ENCODE measurements at regions of chr2 and their contacts with region 1.

Region 1: DNA sequence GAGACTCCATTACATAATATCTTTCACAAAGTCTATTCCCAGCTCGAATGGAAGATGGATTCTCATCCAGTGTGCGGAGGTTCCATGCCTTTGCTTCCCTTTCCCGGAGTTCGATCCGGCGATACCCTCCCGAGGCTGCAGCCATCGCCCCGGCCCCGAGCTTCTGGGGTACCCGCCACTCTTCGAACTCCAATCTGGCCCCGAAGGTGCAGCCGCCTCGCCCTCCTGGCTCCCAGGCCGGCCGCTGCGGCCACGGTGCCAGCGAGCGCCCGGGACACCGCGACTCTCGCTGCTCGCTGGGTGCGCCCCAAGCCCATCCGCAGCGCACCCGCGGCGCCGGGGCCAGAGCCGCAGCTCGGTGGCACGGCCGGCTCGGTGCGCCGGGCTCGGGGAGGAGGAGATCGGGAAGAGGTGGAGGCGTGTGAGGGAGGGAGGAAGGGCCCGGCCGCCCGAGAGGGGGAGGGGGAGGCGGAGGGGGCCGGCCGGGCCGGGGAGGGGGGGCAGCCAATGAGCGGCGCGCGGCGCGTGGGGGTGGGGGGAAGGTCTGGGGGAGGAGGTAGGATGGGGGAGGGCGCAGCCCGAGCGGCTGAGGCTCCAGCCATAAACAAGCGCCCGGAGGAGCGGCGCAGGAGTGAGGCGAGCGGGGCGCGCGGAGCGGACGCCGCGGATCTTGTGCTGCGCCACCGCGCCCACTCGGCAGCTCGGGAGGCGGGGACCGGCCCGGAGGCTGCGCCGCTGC is at the start of gene CRIM1:
- DNase-seq: peak; percentile 79
- ATAC-seq: peak; percentile 63
- H3K4me3 ChIP-seq: peak within 1 kb of the TSS; percentile 81 to 98 (median 89)
- H3K27ac ChIP-seq: peak within 1 kb of the TSS; percentile 76
- H3K4me1 ChIP-seq: peaks cover 59% of the 10 kb centered on the region
- H3K27me3 ChIP-seq: no peaks in the 10 kb centered on the region; a peak in 1 of 5 replicates
- CTCF ChIP-seq: no peak
- EP300 ChIP-seq: no peak; a peak in 1 of 4 replicates
- POLR2A ChIP-seq: peak; percentile 91 to 95
- RAD21 ChIP-seq: peak; percentile 53
- total RNA-seq, gene CRIM1: 21.5 and 39.1 TPM in 2 replicates

Region 2: DNA sequence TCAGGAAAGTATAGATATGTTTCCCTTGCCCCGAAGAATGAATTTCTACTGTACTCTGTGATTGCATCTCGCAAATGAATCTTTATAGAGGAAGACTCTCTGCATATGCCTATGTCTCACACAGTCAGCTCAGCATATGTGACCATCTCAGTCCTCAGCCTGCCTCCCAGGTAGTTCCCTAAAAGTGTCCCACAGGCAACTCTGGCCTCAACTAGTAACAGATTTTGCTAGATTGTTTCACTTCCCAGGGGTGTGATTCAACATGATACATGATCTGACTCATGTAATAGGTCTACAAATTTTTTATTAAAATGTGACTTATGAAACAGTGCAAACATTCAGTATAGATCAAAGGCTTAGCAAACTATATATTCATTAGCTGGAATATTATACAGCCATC is 296.4 kb before region 1 on chr2:
- CTCF ChIA-PET with region 1: no interaction called
- POLR2A ChIA-PET with region 1: no interaction called
- in situ Hi-C with region 1: no loop called
- intact Hi-C with region 1: no loop called
- DNase-seq: no peak
- ATAC-seq: no peak
- H3K4me3 ChIP-seq: no peak overlapping the region
- H3K27ac ChIP-seq: no peak overlapping the region
- H3K4me1 ChIP-seq: no peaks in the 10 kb centered on the region
- H3K27me3 ChIP-seq: no peaks in the 10 kb centered on the region; a peak in 1 of 5 replicates
- CTCF ChIP-seq: no peak
- EP300 ChIP-seq: no peak
- POLR2A ChIP-seq: no peak
- RAD21 ChIP-seq: no peak

Region 3: DNA sequence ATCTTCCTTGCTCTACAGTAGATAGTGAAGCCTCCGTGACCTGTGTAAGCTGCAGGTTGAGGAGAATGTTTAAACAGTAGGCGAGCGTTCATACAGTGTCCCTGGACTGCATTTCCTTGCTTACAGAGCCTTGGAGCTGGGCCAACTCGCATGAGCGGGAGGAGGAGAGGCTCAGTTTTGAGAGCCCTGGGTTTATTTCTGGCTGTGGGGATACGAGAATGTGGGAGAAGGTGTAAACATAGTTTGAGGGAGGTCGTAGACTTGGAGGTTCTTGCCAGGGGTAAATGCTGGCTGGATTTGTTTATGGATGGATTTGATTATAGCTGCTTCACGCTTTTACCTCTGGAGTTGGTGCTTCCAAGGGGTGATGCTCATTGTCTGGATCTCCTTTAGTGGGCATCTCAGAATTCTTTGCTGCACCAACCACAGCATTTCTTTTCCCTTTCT is 21.0 kb after region 1 on chr2:
- CTCF ChIA-PET with region 1: no interaction called
- POLR2A ChIA-PET with region 1: interaction called, 21 read pairs
- in situ Hi-C with region 1: no loop called
- intact Hi-C with region 1: loop called (anchors 1 kb)
- DNase-seq: peak; percentile 93
- ATAC-seq: peak; percentile 77
- H3K4me3 ChIP-seq: peak overlapping the region in 2 of 3 experiments; percentile 6 to 16; a peak in 1 of 6 replicates
- H3K27ac ChIP-seq: peak overlapping the region; percentile 75
- H3K4me1 ChIP-seq: peaks cover 100% of the 10 kb centered on the region
- H3K27me3 ChIP-seq: no peaks in the 10 kb centered on the region
- CTCF ChIP-seq: no peak
- EP300 ChIP-seq: peak in 1 of 2 experiments; percentile 74; a peak in 2 of 4 replicates
- POLR2A ChIP-seq: no peak
- RAD21 ChIP-seq: no peak

Region 4: GRCh38 chr2:36433311-36434217 is 78.2 kb after region 1 on chr2:
- CTCF ChIA-PET with region 1: no interaction called
- POLR2A ChIA-PET with region 1: interaction called, 5 read pairs
- in situ Hi-C with region 1: no loop called
- intact Hi-C with region 1: loop called (anchors 1 kb)
- DNase-seq: peak; percentile 97
- ATAC-seq: peak; percentile 98
- H3K4me3 ChIP-seq: no peak overlapping the region; a peak in 1 of 6 replicates
- H3K27ac ChIP-seq: peak overlapping the region; percentile 5
- H3K4me1 ChIP-seq: peaks cover 34% of the 10 kb centered on the region
- H3K27me3 ChIP-seq: no peaks in the 10 kb centered on the region
- CTCF ChIP-seq: no peak
- EP300 ChIP-seq: peak; percentile 39 to 80; a peak in 3 of 4 replicates
- POLR2A ChIP-seq: no peak
- RAD21 ChIP-seq: peak; percentile 16; the same call in 1 of the 2 replicates

Region 5: DNA sequence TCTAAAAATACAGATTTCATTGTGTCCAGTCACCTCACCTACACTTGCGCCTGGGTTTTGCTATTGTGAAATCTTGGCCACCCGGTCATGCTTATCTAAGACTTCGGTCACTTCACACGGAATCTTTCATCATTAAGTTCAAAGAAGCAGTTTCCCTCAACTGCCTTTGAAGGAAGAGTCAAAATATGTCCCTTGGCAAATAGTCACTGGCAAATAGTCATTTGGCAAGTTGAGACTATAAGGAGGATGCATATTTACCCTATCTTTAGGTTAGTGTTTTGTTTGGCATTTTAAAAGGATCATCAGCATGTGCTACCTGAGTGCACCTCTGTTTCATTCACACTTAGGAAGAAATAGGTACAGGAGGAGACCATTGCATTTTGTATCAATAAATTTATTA is 146.8 kb after region 1 on chr2:
- CTCF ChIA-PET with region 1: interaction called, 21 read pairs
- POLR2A ChIA-PET with region 1: interaction called, 11 read pairs
- in situ Hi-C with region 1: loop called (anchors 5 kb)
- intact Hi-C with region 1: loop called (anchors 1 kb)
- DNase-seq: peak; percentile 99
- ATAC-seq: peak; percentile 69
- H3K4me3 ChIP-seq: no peak overlapping the region
- H3K27ac ChIP-seq: peak overlapping the region; percentile 69
- H3K4me1 ChIP-seq: peaks cover 67% of the 10 kb centered on the region
- H3K27me3 ChIP-seq: no peaks in the 10 kb centered on the region
- CTCF ChIP-seq: no peak
- EP300 ChIP-seq: peak; percentile 89 to 100; a peak in 3 of 4 replicates
- POLR2A ChIP-seq: no peak
- RAD21 ChIP-seq: no peak

Region 6: DNA sequence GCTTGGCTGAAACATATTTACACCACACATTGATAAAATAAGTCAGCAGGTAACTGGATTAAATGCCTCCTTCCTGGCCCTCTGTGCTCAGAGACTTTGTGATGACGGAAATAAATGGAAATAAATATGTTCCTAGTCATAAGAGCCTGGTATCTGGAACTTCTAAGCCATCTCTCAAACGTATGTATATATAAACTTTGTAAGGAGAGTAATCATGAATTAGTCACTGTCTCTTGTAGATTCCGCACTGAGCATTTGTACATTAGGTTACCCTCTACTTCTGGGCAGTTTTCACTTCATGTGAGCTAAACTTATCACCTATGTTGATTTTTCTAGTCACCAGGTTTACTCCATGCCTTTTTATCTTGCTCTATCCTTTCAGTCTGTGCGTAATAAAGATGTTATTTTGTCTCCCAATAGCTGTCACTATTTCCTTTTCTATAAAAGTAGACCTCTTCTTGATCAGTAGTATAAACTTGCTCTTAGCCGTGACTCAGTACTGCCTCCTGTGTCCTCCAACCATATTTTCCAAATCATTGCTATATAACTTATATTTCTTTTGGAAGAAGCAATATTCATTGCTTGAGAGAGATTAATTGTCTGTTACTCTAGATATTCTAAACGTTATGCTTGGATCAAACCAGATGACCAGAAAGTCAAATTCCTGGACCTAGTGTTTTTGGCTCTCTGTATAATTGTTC is 189.5 kb after region 1 on chr2:
- CTCF ChIA-PET with region 1: no interaction called
- POLR2A ChIA-PET with region 1: no interaction called
- in situ Hi-C with region 1: no loop called
- intact Hi-C with region 1: loop called (anchors 1 kb)
- DNase-seq: no peak
- ATAC-seq: peak; percentile 32; the same call in 1 of the 3 replicates
- H3K4me3 ChIP-seq: no peak overlapping the region
- H3K27ac ChIP-seq: no peak overlapping the region
- H3K4me1 ChIP-seq: no peaks in the 10 kb centered on the region
- H3K27me3 ChIP-seq: no peaks in the 10 kb centered on the region
- CTCF ChIP-seq: no peak
- EP300 ChIP-seq: no peak
- POLR2A ChIP-seq: no peak
- RAD21 ChIP-seq: no peak

Measured in HepG2 (cell line).